ENCODE measurements at regions of chr14 and their contacts with region 1.

Region 1: GRCh38 chr14:36315159-36315853 is 5.1 kb downstream of the MBIP start:
- DNase-seq: peak; percentile 72
- ATAC-seq: peak; percentile 82
- H3K4me3 Mint-ChIP-seq: peak overlapping the region; percentile 46
- H3K27ac Mint-ChIP-seq: peak overlapping the region; percentile 86
- H3K4me1 Mint-ChIP-seq: peaks cover 42% of the 10 kb centered on the region
- H3K27me3 Mint-ChIP-seq: no peaks in the 10 kb centered on the region

Region 2: GRCh38 chr14:34461334-34462131 is 1853.8 kb before region 1 on chr14:
- CTCF ChIA-PET with region 1: no interaction called
- POLR2A ChIA-PET with region 1: no interaction called
- intact Hi-C with region 1: loop called in 1 of 2 experiments (anchors 5 kb)
- DNase-seq: peak; percentile 50
- ATAC-seq: peak; percentile 62
- H3K4me3 Mint-ChIP-seq: peak overlapping the region; percentile 91
- H3K27ac Mint-ChIP-seq: peak overlapping the region; percentile 85
- H3K4me1 Mint-ChIP-seq: peaks cover 19% of the 10 kb centered on the region
- H3K27me3 Mint-ChIP-seq: no peaks in the 10 kb centered on the region

Region 3: DNA sequence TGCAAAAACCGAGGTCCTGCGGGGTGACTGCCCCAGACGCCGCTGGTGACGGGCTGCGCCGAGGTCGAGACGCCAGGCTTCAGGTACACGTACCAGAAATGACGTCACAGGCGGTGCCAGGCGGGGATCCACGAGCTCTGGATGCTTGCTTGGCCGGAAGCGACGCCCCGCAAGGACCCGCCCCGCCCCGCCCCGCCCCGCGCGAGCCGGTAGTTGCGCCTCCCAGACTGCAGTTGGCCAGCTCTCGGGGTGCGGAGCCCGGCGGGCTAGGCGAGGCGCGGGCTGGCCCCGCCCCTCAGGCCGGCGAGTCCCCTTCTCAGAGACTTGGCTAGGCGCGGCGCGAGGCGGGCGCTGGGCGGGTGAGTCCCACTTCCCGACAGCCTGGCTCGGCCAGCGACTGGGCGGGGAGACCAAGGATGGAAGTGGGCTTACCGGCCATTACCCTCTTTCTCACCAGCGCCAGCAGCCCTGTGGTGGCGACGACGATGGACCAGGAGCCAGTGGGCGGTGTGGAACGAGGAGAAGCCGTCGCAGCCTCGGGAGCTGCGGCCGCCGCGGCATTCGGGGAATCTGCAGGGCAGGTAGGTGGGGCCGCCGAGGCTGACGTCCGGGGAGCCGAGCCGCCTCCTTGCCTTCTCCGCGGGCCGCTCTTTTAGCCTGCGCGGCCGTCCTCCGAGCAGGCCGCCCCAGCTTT is 1269.1 kb before region 1 on chr14 and contains the start of gene FAM177A1:
- CTCF ChIA-PET with region 1: no interaction called
- POLR2A ChIA-PET with region 1: no interaction called
- intact Hi-C with region 1: loop called in 1 of 2 experiments (anchors 10 kb)
- DNase-seq: peak; percentile 100
- ATAC-seq: peak; percentile 94
- H3K4me3 Mint-ChIP-seq: peak within 1 kb of the TSS; percentile 95
- H3K27ac Mint-ChIP-seq: peak within 1 kb of the TSS; percentile 99
- H3K4me1 Mint-ChIP-seq: peaks cover 23% of the 10 kb centered on the region
- H3K27me3 Mint-ChIP-seq: no peaks in the 10 kb centered on the region
- total RNA-seq, gene FAM177A1: 35.4 to 37.2 TPM

Region 4: DNA sequence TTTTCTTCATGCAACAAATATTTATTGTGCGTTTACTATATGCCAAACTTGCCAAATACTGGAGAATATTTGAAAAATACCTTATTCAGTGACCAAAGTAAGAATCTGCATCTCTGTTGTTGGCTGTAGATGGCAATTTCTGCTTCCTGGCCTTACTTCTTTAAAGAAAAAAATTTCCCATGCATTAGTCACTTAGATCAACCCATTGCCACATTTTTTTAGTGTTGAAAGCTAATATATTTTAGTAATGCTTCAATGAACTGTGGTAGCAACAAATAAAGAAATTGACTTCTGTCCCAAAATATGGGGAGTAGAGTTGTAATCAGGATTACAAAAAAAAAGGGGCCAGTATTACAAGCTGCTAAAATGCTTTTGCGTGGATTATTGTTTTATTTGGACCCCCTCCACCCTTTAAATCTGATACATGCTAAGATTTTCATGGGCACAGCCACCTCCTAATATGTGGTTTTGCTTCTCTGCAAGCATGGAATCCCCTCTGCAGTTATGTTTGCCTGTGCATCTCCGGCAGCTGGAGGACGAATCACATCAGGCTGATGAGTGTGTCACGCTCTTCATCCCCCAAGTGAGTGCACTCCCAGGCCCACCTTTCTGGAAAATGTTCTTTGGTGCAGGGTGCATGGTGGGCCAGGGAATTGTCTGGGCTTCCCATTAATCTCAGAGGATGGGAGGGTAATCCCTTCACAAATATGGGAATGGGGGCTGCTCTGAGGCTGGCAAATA is 100.7 kb before region 1 on chr14:
- CTCF ChIA-PET with region 1: no interaction called
- POLR2A ChIA-PET with region 1: no interaction called
- intact Hi-C with region 1: loop called in 1 of 2 experiments (anchors 5 kb)
- DNase-seq: no peak
- ATAC-seq: no peak
- H3K4me3 Mint-ChIP-seq: no peak overlapping the region
- H3K27ac Mint-ChIP-seq: no peak overlapping the region
- H3K4me1 Mint-ChIP-seq: peaks cover 22% of the 10 kb centered on the region
- H3K27me3 Mint-ChIP-seq: peaks cover 25% of the 10 kb centered on the region

Region 5: DNA sequence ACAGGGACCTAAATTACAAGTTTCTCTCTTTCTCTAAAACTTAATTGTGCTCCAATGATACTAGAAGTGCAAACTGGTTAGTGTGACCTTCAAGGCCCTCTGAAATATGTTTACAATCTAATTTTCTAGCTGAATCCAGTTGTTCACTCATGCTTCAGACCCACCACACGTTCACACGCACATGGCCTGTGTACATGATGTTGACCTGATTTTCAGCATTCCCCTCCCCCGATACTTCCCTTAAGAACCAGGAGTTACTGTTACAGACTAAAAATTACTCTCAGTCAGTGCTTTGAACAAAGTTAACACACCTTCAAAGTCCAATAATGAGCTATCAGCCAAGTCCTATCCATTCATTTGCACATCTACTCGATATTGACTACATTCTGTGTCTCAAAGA is 11.3 kb before region 1 on chr14:
- CTCF ChIA-PET with region 1: no interaction called
- POLR2A ChIA-PET with region 1: interaction called, 12 read pairs
- intact Hi-C with region 1: no loop called
- DNase-seq: no peak
- ATAC-seq: no peak
- H3K4me3 Mint-ChIP-seq: no peak overlapping the region
- H3K27ac Mint-ChIP-seq: peak overlapping the region; percentile 3
- H3K4me1 Mint-ChIP-seq: no peaks in the 10 kb centered on the region
- H3K27me3 Mint-ChIP-seq: no peaks in the 10 kb centered on the region

Region 6: GRCh38 chr14:36700656-36701055 is 385.4 kb after region 1 on chr14:
- CTCF ChIA-PET with region 1: no interaction called
- POLR2A ChIA-PET with region 1: no interaction called
- intact Hi-C with region 1: no loop called
- DNase-seq: no peak
- ATAC-seq: no peak
- H3K4me3 Mint-ChIP-seq: no peak overlapping the region
- H3K27ac Mint-ChIP-seq: no peak overlapping the region
- H3K4me1 Mint-ChIP-seq: no peaks in the 10 kb centered on the region
- H3K27me3 Mint-ChIP-seq: peaks cover 6% of the 10 kb centered on the region